Activated CD8-positive, alpha-beta T cell treated with anti-CD3 and anti-CD28 coated beads for 36 hours (primary cell): ENCODE measurements at regions of chr2 and their contacts with region 1.

Region 1: GRCh38 chr2:120174963-120175581 is 48.1 kb downstream of the TMEM185B start:
- DNase-seq: no peak
- ATAC-seq: no peak
- H3K4me3 Mint-ChIP-seq: no peak overlapping the region
- H3K27ac Mint-ChIP-seq: peak overlapping the region; percentile 69
- H3K4me1 Mint-ChIP-seq: peaks cover 44% of the 10 kb centered on the region
- H3K27me3 Mint-ChIP-seq: no peaks in the 10 kb centered on the region
- CTCF ChIP-seq: peak; percentile 93

Region 2: GRCh38 chr2:119694845-119695521 is 480.1 kb before region 1 on chr2:
- CTCF ChIA-PET with region 1: interaction called, 10 read pairs
- POLR2A ChIA-PET with region 1: interaction called, 3 read pairs
- intact Hi-C with region 1: no loop called
- DNase-seq: no peak
- ATAC-seq: peak; percentile 22
- H3K4me3 Mint-ChIP-seq: no peak overlapping the region
- H3K27ac Mint-ChIP-seq: no peak overlapping the region
- H3K4me1 Mint-ChIP-seq: peaks cover 40% of the 10 kb centered on the region
- H3K27me3 Mint-ChIP-seq: no peaks in the 10 kb centered on the region
- CTCF ChIP-seq: no peak

Region 3: DNA sequence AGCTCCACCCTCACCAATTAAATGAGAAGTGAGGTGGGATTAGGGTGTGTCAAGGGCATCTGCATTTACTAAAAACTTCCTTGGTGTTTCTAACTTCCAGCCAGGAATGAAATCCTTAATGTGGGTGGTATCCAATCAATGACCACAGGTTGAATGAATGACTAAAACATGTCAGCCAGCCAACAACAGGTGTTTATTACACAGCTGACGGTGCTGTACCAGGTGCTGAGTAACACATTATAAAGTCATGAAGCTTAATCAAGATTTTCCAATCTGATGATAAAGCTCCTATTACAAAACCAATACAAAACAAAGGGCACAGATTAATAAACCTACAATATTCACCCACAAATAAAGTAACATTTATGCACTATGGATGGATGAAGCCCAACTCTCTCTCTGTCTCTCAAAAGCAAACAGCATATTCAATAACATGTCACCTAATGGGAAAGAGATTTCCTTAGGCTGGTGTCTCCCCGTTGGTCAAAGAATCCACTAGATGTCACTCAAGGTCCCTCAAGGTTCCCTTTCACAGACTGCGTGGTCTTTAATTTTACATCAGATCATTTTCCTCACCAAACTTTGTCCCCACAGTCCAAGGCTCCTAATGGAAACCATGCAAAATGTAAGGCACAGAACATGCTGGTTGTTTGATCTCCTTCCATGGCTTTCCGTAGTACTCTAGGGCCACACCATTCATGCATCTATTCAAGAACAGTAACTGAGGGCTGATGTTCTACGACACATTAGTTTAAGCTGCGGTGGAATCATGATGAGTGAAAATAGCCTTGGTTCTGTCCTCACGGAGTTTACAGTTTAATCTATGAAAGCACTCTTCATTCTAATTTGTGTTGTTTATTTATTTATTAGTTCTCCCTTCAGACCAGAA is 421.8 kb before region 1 on chr2:
- CTCF ChIA-PET with region 1: interaction called, 82 read pairs
- POLR2A ChIA-PET with region 1: interaction called, 4 read pairs
- intact Hi-C with region 1: loop called (anchors 1 kb)
- DNase-seq: peak; percentile 28
- ATAC-seq: peak; percentile 81
- H3K4me3 Mint-ChIP-seq: no peak overlapping the region
- H3K27ac Mint-ChIP-seq: no peak overlapping the region
- H3K4me1 Mint-ChIP-seq: peaks cover 13% of the 10 kb centered on the region
- H3K27me3 Mint-ChIP-seq: no peaks in the 10 kb centered on the region
- CTCF ChIP-seq: peak; percentile 69

Region 4: DNA sequence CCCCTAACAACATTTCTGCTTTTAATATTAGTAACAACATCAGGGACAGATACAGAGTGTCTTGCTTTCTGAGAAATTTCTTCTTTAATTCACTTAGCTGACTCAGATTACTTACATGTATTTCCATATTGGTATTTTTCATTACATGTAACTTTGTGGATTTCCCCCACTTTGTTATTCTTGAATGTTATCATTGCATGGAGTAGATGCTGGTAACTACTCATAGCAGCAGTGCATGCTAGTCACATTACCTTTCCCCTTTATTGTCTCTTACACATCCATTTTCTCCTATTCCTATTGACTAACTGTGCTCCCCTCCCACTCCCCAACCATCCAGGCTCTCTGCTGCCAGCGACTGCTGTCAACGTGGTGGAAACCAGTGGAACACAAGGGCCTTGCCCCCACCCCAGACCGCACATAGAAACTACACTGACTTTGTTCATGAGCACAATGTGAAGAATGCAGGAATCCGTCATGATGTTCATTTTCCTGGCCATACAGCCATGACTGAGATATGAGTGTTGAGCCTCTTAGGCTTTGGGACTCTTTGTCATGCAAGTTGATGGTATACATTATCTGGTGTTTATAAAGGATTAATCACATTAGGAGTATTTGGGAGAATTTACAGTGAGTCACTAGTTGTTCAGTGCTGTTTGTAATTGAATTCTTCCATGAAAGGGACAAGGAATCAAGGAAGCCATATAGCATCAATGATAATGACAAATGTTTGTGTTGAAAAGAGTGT is 71.2 kb before region 1 on chr2:
- CTCF ChIA-PET with region 1: interaction called, 135 read pairs
- POLR2A ChIA-PET with region 1: interaction called, 4 read pairs
- intact Hi-C with region 1: loop called (anchors 1 kb)
- DNase-seq: no peak
- ATAC-seq: no peak
- H3K4me3 Mint-ChIP-seq: no peak overlapping the region
- H3K27ac Mint-ChIP-seq: no peak overlapping the region
- H3K4me1 Mint-ChIP-seq: peaks cover 5% of the 10 kb centered on the region
- H3K27me3 Mint-ChIP-seq: no peaks in the 10 kb centered on the region
- CTCF ChIP-seq: no peak

Region 5: GRCh38 chr2:120128216-120128615 is 46.9 kb before region 1 on chr2:
- CTCF ChIA-PET with region 1: interaction called, 15 read pairs
- POLR2A ChIA-PET with region 1: no interaction called
- intact Hi-C with region 1: no loop called
- DNase-seq: no peak
- ATAC-seq: no peak
- H3K4me3 Mint-ChIP-seq: no peak overlapping the region
- H3K27ac Mint-ChIP-seq: no peak overlapping the region
- H3K4me1 Mint-ChIP-seq: peaks cover 1% of the 10 kb centered on the region
- H3K27me3 Mint-ChIP-seq: no peaks in the 10 kb centered on the region
- CTCF ChIP-seq: no peak

Region 6: GRCh38 chr2:120206022-120206581 is 31.0 kb after region 1 on chr2:
- CTCF ChIA-PET with region 1: interaction called, 12 read pairs
- POLR2A ChIA-PET with region 1: no interaction called
- intact Hi-C with region 1: no loop called
- DNase-seq: peak; percentile 74
- ATAC-seq: peak; percentile 79
- H3K4me3 Mint-ChIP-seq: no peak overlapping the region
- H3K27ac Mint-ChIP-seq: no peak overlapping the region
- H3K4me1 Mint-ChIP-seq: peaks cover 11% of the 10 kb centered on the region
- H3K27me3 Mint-ChIP-seq: no peaks in the 10 kb centered on the region
- CTCF ChIP-seq: peak; percentile 74

Region 7: GRCh38 chr2:120525056-120526046 is 350.3 kb after region 1 on chr2:
- CTCF ChIA-PET with region 1: no interaction called
- POLR2A ChIA-PET with region 1: no interaction called
- intact Hi-C with region 1: no loop called
- DNase-seq: no peak
- ATAC-seq: no peak
- H3K4me3 Mint-ChIP-seq: no peak overlapping the region
- H3K27ac Mint-ChIP-seq: no peak overlapping the region
- H3K4me1 Mint-ChIP-seq: no peaks in the 10 kb centered on the region
- H3K27me3 Mint-ChIP-seq: peaks cover 19% of the 10 kb centered on the region
- CTCF ChIP-seq: no peak

Region 8: DNA sequence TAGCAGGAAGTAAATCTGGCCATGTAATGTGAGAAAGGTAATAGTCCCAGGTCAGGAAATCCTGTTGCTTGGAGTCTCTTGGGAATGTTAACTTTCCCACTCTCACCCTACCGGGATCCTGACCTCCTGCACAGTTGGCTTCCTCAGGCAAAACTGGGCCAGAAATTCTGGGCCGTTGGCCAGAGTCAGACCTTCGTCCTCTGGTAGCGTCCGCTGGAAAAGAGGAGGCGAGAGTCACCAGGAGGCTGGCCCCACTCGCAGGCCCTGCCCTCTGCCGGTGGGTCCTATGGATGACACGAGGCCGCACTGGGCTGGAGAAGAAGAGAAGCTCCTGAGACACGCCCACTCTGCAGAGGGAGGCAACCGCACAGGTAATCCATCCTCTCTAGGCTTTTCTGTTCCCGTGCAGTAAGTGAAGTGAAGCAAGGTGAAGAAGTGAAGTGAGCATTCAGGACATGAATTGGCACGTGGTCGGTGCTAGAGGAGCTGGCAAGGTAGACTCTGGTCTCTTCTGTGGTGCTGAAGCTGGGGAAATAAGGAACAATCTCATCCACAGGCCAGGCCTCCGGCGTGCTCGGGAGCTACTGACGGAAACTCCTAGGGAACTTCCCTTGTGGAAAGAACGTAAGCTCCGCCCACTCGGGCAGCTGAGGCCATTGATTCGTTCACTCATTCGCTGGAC is 377.9 kb after region 1 on chr2:
- CTCF ChIA-PET with region 1: no interaction called
- POLR2A ChIA-PET with region 1: no interaction called
- intact Hi-C with region 1: no loop called
- DNase-seq: peak; percentile 57
- ATAC-seq: peak; percentile 89
- H3K4me3 Mint-ChIP-seq: no peak overlapping the region
- H3K27ac Mint-ChIP-seq: no peak overlapping the region
- H3K4me1 Mint-ChIP-seq: peaks cover 4% of the 10 kb centered on the region
- H3K27me3 Mint-ChIP-seq: peaks cover 12% of the 10 kb centered on the region
- CTCF ChIP-seq: peak; percentile 55